Activated B cell treated with CpG ODN at 0.5 μM for 24 hours (primary cell): ENCODE measurements at regions of chr5 and their contacts with region 1.

Region 1: GRCh38 chr5:141320225-141321169 is at the start of gene TAF7:
- DNase-seq: peak; percentile 92
- ATAC-seq: peak; percentile 91
- H3K4me3 Mint-ChIP-seq: peak within 1 kb of the TSS; percentile 99
- H3K27ac Mint-ChIP-seq: peak within 1 kb of the TSS; percentile 99
- H3K4me1 Mint-ChIP-seq: peaks cover 29% of the 10 kb centered on the region
- H3K27me3 Mint-ChIP-seq: no peaks in the 10 kb centered on the region
- CTCF ChIP-seq: peak; percentile 49
- total RNA-seq, gene TAF7: 86.7 and 87.3 TPM in 2 replicates

Region 2: GRCh38 chr5:140647042-140647341 is 673.5 kb before region 1 on chr5:
- CTCF ChIA-PET with region 1: no interaction called
- POLR2A ChIA-PET with region 1: no interaction called
- intact Hi-C with region 1: loop called (anchors 1 kb)
- DNase-seq: no peak
- ATAC-seq: no peak
- H3K4me3 Mint-ChIP-seq: peak overlapping the region; percentile 99
- H3K27ac Mint-ChIP-seq: peak overlapping the region; percentile 98
- H3K4me1 Mint-ChIP-seq: peaks cover 38% of the 10 kb centered on the region
- H3K27me3 Mint-ChIP-seq: no peaks in the 10 kb centered on the region
- CTCF ChIP-seq: no peak

Region 3: GRCh38 chr5:140808889-140809291 is 511.6 kb before region 1 on chr5:
- CTCF ChIA-PET with region 1: no interaction called
- POLR2A ChIA-PET with region 1: no interaction called
- intact Hi-C with region 1: no loop called
- DNase-seq: no peak
- ATAC-seq: no peak
- H3K4me3 Mint-ChIP-seq: no peak overlapping the region
- H3K27ac Mint-ChIP-seq: no peak overlapping the region
- H3K4me1 Mint-ChIP-seq: no peaks in the 10 kb centered on the region
- H3K27me3 Mint-ChIP-seq: peaks cover 8% of the 10 kb centered on the region
- CTCF ChIP-seq: no peak

Region 4: DNA sequence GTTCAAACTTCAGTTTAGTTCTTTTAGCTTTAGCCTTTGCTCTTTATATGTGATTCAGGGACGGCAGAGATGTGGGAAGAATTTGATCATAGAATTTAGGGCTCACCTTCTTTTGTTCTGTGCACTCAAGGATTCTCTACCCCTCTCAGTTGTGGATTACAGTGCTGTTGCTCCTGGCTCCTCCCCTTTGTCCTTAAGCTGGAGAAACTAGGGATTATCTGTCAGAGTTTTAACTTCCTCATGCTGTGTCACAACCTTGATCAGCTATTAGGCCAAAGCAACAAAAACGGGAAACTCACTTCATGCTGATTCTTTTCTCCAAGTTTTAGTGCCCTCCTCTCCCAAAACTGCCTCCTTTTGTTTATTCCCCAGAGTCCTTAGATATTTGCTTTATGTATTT is 367.3 kb before region 1 on chr5:
- CTCF ChIA-PET with region 1: no interaction called
- POLR2A ChIA-PET with region 1: no interaction called
- intact Hi-C with region 1: no loop called
- DNase-seq: no peak
- ATAC-seq: no peak
- H3K4me3 Mint-ChIP-seq: no peak overlapping the region
- H3K27ac Mint-ChIP-seq: no peak overlapping the region
- H3K4me1 Mint-ChIP-seq: no peaks in the 10 kb centered on the region
- H3K27me3 Mint-ChIP-seq: no peaks in the 10 kb centered on the region
- CTCF ChIP-seq: no peak

Region 5: DNA sequence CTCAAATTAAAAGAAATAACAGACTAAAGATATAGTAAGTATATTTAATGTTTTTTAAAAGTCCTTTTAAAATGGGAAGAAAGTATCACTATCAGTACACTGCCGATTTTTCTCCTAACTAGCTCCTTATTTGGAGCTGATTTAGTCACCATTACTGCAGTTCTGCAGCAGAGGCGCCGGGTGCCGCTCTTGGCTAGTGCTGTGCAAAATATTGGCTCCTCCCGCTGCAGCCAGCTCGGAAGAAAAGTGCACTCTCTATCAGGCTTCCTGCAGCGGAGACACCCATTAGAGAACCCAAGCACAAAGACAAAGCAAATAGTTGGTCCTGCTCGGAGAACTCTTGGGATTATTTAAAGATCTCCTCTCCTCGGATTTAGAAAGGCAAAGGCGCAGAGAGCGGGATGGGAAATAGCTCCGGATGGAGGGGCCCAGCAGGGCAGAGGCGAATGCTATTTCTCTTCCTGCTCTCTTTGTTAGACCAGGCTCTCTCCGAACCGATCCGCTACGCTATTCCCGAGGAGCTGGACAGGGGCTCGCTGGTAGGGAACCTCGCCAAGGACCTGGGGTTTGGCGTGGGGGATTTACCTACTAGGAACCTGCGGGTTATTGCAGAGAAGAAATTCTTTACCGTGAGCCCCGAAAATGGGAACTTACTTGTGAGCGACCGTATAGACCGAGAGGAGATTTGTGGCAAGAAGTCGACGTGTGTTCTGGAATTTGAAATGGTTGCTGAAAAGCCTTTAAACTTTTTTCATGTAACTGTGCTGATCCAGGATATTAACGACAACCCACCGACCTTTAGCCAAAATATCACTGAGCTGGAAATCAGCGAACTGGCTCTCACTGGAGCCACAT is 49.7 kb after region 1 on chr5 and contains the start of gene PCDHGB3:
- CTCF ChIA-PET with region 1: interaction called, 10 read pairs
- POLR2A ChIA-PET with region 1: no interaction called
- intact Hi-C with region 1: no loop called
- DNase-seq: no peak
- ATAC-seq: peak; percentile 64
- H3K4me3 Mint-ChIP-seq: peak within 1 kb of the TSS; percentile 81
- H3K27ac Mint-ChIP-seq: no peak within 1 kb of the TSS
- H3K4me1 Mint-ChIP-seq: peaks cover 7% of the 10 kb centered on the region
- H3K27me3 Mint-ChIP-seq: peaks cover 54% of the 10 kb centered on the region
- CTCF ChIP-seq: no peak
- total RNA-seq, gene PCDHGB3: 2.0 and 2.6 TPM in 2 replicates

Region 6: GRCh38 chr5:141512390-141512910 is 192.0 kb after region 1 on chr5:
- CTCF ChIA-PET with region 1: no interaction called
- POLR2A ChIA-PET with region 1: interaction called, 24 read pairs
- intact Hi-C with region 1: loop called (anchors 1 kb)
- DNase-seq: peak; percentile 66
- ATAC-seq: no peak
- H3K4me3 Mint-ChIP-seq: peak overlapping the region; percentile 85
- H3K27ac Mint-ChIP-seq: peak overlapping the region; percentile 20
- H3K4me1 Mint-ChIP-seq: peaks cover 84% of the 10 kb centered on the region
- H3K27me3 Mint-ChIP-seq: no peaks in the 10 kb centered on the region
- CTCF ChIP-seq: peak; percentile 37

Region 7: DNA sequence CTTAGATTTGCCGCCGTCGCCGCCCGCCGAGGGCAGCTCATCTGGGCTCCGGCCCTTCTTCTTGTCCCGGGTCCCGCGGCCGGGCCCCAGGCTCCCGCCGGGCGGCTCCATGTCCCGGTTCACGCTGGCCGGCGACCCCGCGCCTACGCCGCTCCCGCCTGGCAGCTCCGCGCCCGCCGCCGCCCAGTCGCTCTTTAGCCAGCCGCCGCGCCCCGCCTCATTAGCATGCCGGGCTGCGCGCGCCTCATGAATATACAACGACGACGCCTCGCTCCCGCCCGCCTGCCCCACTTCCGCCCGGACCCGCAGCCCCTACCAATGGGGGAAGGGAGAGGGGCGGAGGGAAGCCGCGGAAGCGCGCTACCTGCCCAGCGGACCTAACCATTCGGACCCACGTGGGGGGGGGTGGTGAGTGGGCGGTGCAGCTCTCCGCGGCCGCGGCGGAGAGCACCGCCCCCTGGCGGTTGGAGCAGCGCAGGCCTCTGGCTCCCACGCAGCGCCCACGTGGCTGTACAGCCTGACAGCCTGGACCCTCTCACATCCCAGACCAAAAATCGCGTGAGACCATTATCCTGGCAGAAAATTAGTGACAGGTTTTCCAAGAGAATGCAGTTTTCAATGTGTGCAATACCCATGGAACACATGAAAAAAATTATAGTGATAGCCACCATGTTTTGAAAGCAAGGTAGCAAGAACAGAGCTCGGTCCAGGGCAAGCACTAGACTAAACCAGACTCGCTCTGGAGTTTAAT is 298.5 kb after region 1 on chr5 and contains the start of gene DIAPH1:
- CTCF ChIA-PET with region 1: no interaction called
- POLR2A ChIA-PET with region 1: interaction called, 11 read pairs
- intact Hi-C with region 1: loop called (anchors 2 kb)
- DNase-seq: peak; percentile 95
- ATAC-seq: peak; percentile 89
- H3K4me3 Mint-ChIP-seq: peak within 1 kb of the TSS; percentile 93
- H3K27ac Mint-ChIP-seq: peak within 1 kb of the TSS; percentile 92
- H3K4me1 Mint-ChIP-seq: peaks cover 66% of the 10 kb centered on the region
- H3K27me3 Mint-ChIP-seq: no peaks in the 10 kb centered on the region
- CTCF ChIP-seq: peak; percentile 69
- total RNA-seq, gene DIAPH1: 136 and 138 TPM in 2 replicates

Region 8: DNA sequence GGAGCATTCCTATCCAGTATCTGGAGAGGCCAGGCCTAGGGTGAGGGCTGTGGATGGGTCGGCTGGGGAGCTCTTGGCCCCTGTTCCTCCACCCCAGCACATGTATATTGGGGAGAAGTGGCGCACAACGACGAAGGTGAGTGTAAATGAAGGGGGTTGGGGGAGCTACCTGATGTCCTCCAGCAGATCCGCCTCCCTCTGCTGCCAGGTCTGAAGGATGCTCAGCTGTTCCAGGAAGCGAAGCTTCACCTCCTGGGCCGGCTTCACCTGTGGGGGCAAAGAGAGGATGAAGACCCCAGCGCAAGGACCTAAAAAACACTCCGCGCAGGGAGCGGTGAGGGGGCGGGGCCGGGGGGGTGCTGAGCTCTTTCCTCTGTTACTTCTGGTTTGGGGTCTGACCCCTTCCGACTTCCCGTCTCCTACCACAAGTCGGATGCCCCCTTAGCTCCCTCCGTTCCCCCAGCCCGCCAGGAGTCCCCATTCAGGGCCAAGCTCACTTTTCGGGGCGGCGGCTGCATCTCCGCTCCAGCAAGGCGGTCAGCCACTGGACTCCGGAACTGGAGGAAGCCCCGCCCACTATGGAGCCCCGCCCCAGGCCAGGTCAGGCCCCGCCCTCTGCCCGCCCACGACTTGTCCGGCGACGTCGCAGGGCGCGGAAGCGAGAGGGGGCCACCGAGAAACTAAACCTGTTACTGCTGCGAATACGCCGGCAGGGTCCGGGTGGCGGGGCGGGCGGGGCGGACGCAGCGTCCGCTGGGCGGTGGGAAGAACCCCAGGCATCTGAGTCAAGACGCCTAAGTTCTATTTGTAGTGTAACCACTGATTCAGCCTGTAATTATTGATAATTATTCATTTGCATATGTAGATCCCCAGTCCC is 330.6 kb after region 1 on chr5 and contains the start of gene FCHSD1:
- CTCF ChIA-PET with region 1: no interaction called
- POLR2A ChIA-PET with region 1: interaction called, 11 read pairs
- intact Hi-C with region 1: no loop called
- DNase-seq: peak; percentile 83
- ATAC-seq: peak; percentile 99
- H3K4me3 Mint-ChIP-seq: peak within 1 kb of the TSS; percentile 98
- H3K27ac Mint-ChIP-seq: peak within 1 kb of the TSS; percentile 96
- H3K4me1 Mint-ChIP-seq: peaks cover 29% of the 10 kb centered on the region
- H3K27me3 Mint-ChIP-seq: peaks cover 3% of the 10 kb centered on the region
- CTCF ChIP-seq: no peak
- total RNA-seq, gene FCHSD1: 63.2 and 79.5 TPM in 2 replicates

Region 9: GRCh38 chr5:142356716-142357473 is 1036.4 kb after region 1 on chr5:
- CTCF ChIA-PET with region 1: no interaction called
- POLR2A ChIA-PET with region 1: no interaction called
- intact Hi-C with region 1: loop called (anchors 10 kb)
- DNase-seq: peak; percentile 80
- ATAC-seq: peak; percentile 84
- H3K4me3 Mint-ChIP-seq: peak overlapping the region; percentile 83
- H3K27ac Mint-ChIP-seq: peak overlapping the region; percentile 79
- H3K4me1 Mint-ChIP-seq: peaks cover 40% of the 10 kb centered on the region
- H3K27me3 Mint-ChIP-seq: peaks cover 5% of the 10 kb centered on the region
- CTCF ChIP-seq: no peak